Activated T-helper 2 cell treated with anti-CD3 and anti-CD28 coated beads, Interferon-gamma antibody, Interleukin-2, Interleukin-4, amounts not matched to agents 10 μg/mL and 5 μg/mL and 100 μg/mL, durations not matched to agents 14 hours and 24 hours and 36 hours (primary cell): ENCODE measurements at regions of chr20 and their contacts with region 1.

Region 1: GRCh38 chr20:51059862-51060261 is 37.0 kb upstream of the KCNG1 start:
- DNase-seq: no peak
- H3K4me3 Mint-ChIP-seq: no peak overlapping the region
- H3K27ac Mint-ChIP-seq: no peak overlapping the region
- H3K4me1 Mint-ChIP-seq: peaks cover 38% of the 10 kb centered on the region
- H3K27me3 Mint-ChIP-seq: peaks cover 21% of the 10 kb centered on the region

Region 2: GRCh38 chr20:51022803-51023630 is 36.8 kb before region 1 on chr20 and contains the start of gene KCNG1:
- intact Hi-C with region 1: loop called (anchors 5 kb)
- DNase-seq: peak; percentile 48
- H3K4me3 Mint-ChIP-seq: peak within 1 kb of the TSS; percentile 59
- H3K27ac Mint-ChIP-seq: no peak within 1 kb of the TSS
- H3K4me1 Mint-ChIP-seq: peaks cover 13% of the 10 kb centered on the region
- H3K27me3 Mint-ChIP-seq: peaks cover 68% of the 10 kb centered on the region
- total RNA-seq, gene KCNG1: 2.2 and 2.3 TPM in 2 replicates

Region 3: GRCh38 chr20:51121901-51122441 is 62.1 kb after region 1 on chr20:
- intact Hi-C with region 1: loop called (anchors 2 kb)
- DNase-seq: no peak
- H3K4me3 Mint-ChIP-seq: no peak overlapping the region
- H3K27ac Mint-ChIP-seq: no peak overlapping the region
- H3K4me1 Mint-ChIP-seq: peaks cover 8% of the 10 kb centered on the region
- H3K27me3 Mint-ChIP-seq: peaks cover 41% of the 10 kb centered on the region

Region 4: DNA sequence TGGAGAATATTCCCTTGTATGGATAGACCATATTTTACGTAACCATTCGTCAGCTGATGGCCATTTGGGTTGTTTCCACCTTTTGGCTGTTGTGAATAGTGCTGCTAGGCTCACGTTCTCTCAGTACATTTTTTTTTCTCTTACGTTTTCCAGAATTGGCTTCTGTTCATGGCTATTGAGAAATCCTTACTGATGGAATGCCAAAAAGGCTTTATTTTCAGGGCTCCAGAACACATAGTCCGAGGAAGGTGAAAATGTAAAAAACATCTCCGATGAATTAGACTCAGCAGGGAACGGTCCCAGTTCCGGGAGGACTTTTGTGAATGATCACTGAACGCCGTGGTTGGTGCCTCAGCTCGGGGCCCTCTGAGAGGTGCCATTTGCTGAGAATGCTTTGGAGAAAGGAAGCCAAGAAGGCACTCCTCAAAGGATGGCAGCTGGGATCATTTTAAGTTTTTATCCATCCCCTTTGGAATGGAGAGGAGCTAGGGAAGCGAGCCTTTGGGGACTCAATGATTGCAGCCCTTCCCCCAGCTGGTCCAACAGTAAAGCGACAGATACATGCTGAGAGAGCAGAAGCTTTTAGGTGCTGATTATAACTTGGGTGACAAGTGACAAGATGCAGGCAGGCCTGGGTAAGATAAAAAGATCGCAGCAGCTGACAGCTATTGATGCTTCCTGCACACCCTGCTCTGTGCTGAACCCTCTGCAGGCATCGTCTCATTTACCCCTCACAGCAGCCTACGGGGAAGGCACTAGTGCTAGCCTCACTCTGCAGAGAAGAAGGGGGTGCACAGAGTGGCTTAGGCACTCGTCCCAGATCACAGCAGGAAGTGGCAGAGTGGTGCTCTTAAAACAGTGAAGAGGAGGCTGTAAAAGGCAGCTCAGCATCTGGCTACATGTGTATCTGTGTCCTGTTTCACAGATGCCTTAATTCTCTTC is 96.5 kb after region 1 on chr20:
- intact Hi-C with region 1: no loop called
- DNase-seq: no peak
- H3K4me3 Mint-ChIP-seq: no peak overlapping the region
- H3K27ac Mint-ChIP-seq: no peak overlapping the region
- H3K4me1 Mint-ChIP-seq: no peaks in the 10 kb centered on the region
- H3K27me3 Mint-ChIP-seq: peaks cover 19% of the 10 kb centered on the region

Region 5: GRCh38 chr20:51399006-51399871 is 339.4 kb after region 1 on chr20:
- intact Hi-C with region 1: loop called (anchors 2 kb)
- DNase-seq: no peak
- H3K4me3 Mint-ChIP-seq: peak overlapping the region; percentile 38
- H3K27ac Mint-ChIP-seq: peak overlapping the region; percentile 95
- H3K4me1 Mint-ChIP-seq: peaks cover 75% of the 10 kb centered on the region
- H3K27me3 Mint-ChIP-seq: no peaks in the 10 kb centered on the region